ENCODE measurements at regions of chr11 and their contacts with region 1.

Region 1: GRCh38 chr11:62238151-62238550 is 3.9 kb upstream of the SCGB1D2 start:
- DNase-seq: no peak
- H3K4me3 ChIP-seq: no peak overlapping the region
- H3K27ac ChIP-seq: no peak overlapping the region
- H3K4me1 ChIP-seq: no peaks in the 10 kb centered on the region
- H3K27me3 ChIP-seq: peaks cover 75% of the 10 kb centered on the region
- CTCF ChIP-seq: no peak

Region 2: DNA sequence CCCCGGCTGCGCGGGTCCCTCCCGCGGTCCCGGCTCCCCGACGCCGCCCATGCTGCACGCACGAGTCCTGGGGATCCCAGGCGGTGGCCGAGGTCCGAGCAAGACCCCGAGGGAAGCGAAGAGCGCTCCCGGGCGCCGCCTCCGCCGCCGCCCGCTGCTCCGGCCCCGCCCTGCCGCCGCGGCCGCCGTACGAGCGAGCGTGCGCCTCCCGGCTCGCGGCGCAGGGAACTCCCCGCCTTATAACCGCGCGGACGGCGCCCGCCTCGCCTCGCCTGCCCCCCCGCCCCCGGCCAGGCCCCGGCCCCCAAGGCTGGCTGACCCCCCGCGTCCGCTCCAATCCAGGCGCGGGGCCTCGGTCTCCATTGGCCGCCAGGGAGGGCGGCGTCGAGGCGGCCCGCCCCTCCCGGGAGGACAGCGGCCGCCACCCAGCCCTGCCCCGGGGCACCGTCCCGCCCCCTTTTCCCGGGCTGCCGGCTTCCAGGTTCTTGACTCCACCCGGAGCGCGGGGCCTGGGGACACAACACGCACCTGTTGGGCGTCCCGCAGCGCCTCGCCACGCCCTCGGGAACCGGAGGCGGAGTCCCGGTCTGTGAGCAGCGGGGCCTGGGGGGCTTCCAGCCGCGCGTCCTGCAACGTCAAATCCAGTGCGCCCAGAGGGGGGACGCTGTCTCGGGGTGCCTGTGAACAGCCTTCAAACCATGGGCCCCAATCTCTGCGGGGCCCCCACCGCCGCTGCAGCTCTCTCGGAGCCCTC is 346.6 kb before region 1 on chr11 and contains the start of gene FADS3:
- CTCF ChIA-PET with region 1: no interaction called
- POLR2A ChIA-PET with region 1: no interaction called
- intact Hi-C with region 1: no loop called
- DNase-seq: peak; percentile 78
- H3K4me3 ChIP-seq: peak within 1 kb of the TSS; percentile 80
- H3K27ac ChIP-seq: peak within 1 kb of the TSS; percentile 66
- H3K4me1 ChIP-seq: peaks cover 6% of the 10 kb centered on the region
- H3K27me3 ChIP-seq: no peaks in the 10 kb centered on the region
- CTCF ChIP-seq: no peak
- total RNA-seq, gene FADS3: 23.3 and 28.1 TPM in 2 replicates

Region 3: GRCh38 chr11:62204430-62204829 is 33.7 kb before region 1 on chr11:
- CTCF ChIA-PET with region 1: no interaction called
- POLR2A ChIA-PET with region 1: no interaction called
- intact Hi-C with region 1: no loop called
- DNase-seq: no peak
- H3K4me3 ChIP-seq: no peak overlapping the region
- H3K27ac ChIP-seq: no peak overlapping the region
- H3K4me1 ChIP-seq: no peaks in the 10 kb centered on the region
- H3K27me3 ChIP-seq: peaks cover 15% of the 10 kb centered on the region
- CTCF ChIP-seq: no peak

Region 4: DNA sequence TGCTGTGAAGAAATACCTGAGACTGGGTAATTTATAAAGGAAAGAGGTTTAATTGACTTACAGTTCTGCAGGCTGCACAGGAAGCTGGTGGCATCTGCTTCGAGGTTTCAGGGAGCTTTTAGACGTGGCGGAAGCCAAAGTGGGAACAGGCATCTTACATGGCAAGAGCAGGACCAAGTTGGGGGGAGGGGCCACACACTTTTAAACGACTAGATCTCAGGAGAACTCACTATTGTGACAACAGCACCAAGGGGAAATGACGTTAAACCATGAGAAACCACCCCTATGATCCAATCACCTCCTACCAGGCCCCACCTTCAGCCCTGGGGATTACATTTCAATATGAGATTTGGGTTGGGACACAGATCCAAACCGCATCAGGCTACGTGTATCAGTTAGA is 71.8 kb after region 1 on chr11:
- CTCF ChIA-PET with region 1: interaction called, 3 read pairs
- POLR2A ChIA-PET with region 1: no interaction called
- intact Hi-C with region 1: loop called (anchors 5 kb)
- DNase-seq: no peak
- H3K4me3 ChIP-seq: no peak overlapping the region
- H3K27ac ChIP-seq: no peak overlapping the region
- H3K4me1 ChIP-seq: no peaks in the 10 kb centered on the region
- H3K27me3 ChIP-seq: peaks cover 18% of the 10 kb centered on the region
- CTCF ChIP-seq: no peak